OCI-LY7 (cell line): ENCODE measurements at regions of chr6 and their contacts with region 1.

Region 1: DNA sequence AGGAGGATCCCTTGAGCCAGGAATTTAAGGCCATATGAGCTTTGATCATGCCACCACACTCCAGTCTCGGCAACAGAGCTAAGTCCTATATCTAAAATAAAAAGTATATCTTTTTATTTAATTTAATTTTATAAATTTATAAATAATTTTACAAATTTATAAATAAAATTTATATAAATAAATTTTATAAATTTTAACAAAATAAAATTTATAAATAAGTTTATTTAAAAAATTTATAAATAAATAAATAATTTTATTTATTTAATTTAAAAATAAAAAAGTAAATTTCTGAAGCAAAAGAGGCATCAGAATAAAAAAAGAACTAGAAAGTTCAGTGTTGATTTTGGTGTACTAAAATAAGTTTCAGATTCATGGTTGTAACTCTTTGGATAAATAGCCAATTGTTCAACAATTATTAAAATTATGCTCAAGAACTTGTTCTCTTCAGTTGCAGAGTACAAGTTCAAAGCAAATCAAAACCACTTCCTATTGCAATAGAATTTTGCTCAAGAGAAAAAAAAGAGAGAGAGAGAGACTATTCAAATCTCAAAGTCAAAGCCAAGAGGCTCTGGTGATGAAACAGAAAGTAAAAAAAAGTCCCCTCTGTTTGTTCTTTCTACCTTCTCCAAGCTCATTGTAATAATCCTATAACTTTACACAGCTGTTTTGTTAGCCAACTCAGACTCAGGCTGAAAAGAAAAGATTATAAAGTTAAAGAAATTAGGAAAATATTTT is 547.5 kb upstream of the ADGRB3 start:
- DNase-seq: peak; percentile 66
- H3K4me3 ChIP-seq: peak overlapping the region; percentile 32
- H3K27ac ChIP-seq: peak overlapping the region; percentile 25
- H3K4me1 ChIP-seq: peaks cover 33% of the 10 kb centered on the region
- CTCF ChIP-seq: no peak

Region 2: DNA sequence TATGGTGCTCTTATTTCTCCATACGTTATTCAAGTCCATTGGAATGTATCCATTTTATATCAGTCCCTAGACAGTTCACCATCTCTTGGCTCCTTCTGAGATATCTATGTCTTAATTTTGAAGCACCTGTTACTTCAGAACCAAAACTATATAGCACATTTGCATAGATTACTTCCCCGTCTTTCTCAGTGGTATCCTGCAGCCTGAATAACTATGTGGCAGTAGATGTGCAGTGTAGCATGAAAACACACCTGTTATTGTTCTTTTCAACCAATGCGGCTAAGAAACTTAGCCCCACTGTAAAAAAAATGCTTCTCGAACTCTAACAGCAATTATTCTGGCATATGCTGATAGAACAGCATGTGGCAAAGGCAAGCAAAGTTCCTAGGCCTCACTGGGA is 636.9 kb before region 1 on chr6:
- CTCF ChIA-PET with region 1: no interaction called
- POLR2A ChIA-PET with region 1: no interaction called
- intact Hi-C with region 1: loop called (anchors 10 kb)
- DNase-seq: peak; percentile 95
- H3K4me3 ChIP-seq: peak overlapping the region; percentile 33
- H3K27ac ChIP-seq: peak overlapping the region; percentile 86
- H3K4me1 ChIP-seq: peaks cover 45% of the 10 kb centered on the region
- CTCF ChIP-seq: no peak

Region 3: GRCh38 chr6:68126089-68126749 is 38.7 kb after region 1 on chr6:
- CTCF ChIA-PET with region 1: no interaction called
- POLR2A ChIA-PET with region 1: interaction called, 11 read pairs
- intact Hi-C with region 1: loop called (anchors 5 kb)
- DNase-seq: no peak
- H3K4me3 ChIP-seq: no peak overlapping the region
- H3K27ac ChIP-seq: no peak overlapping the region
- H3K4me1 ChIP-seq: no peaks in the 10 kb centered on the region
- CTCF ChIP-seq: no peak

Region 4: GRCh38 chr6:68238097-68238601 is 150.6 kb after region 1 on chr6:
- CTCF ChIA-PET with region 1: no interaction called
- POLR2A ChIA-PET with region 1: no interaction called
- intact Hi-C with region 1: no loop called
- DNase-seq: no peak
- H3K4me3 ChIP-seq: no peak overlapping the region
- H3K27ac ChIP-seq: no peak overlapping the region
- H3K4me1 ChIP-seq: no peaks in the 10 kb centered on the region
- CTCF ChIP-seq: no peak